Sigmoid colon (tissue), 7 donors: ENCODE measurements at regions of chr4 and their contacts with region 1.

Region 1: GRCh38 chr4:85756938-85757337 is 282.0 kb downstream of the ARHGAP24 start:
- DNase-seq: no peak
- H3K4me3 ChIP-seq: no peak overlapping the region
- H3K27ac ChIP-seq: no peak overlapping the region
- H3K4me1 ChIP-seq: peaks cover 0 to 10% (median 6%) of the 10 kb centered on the region in 4 donors
- H3K27me3 ChIP-seq: no peaks in the 10 kb centered on the region
- CTCF ChIP-seq: peak in 3 of 4 experiments; percentile 10 to 53 (median 17)
- EP300 ChIP-seq: no peak
- POLR2A ChIP-seq: no peak

Region 2: DNA sequence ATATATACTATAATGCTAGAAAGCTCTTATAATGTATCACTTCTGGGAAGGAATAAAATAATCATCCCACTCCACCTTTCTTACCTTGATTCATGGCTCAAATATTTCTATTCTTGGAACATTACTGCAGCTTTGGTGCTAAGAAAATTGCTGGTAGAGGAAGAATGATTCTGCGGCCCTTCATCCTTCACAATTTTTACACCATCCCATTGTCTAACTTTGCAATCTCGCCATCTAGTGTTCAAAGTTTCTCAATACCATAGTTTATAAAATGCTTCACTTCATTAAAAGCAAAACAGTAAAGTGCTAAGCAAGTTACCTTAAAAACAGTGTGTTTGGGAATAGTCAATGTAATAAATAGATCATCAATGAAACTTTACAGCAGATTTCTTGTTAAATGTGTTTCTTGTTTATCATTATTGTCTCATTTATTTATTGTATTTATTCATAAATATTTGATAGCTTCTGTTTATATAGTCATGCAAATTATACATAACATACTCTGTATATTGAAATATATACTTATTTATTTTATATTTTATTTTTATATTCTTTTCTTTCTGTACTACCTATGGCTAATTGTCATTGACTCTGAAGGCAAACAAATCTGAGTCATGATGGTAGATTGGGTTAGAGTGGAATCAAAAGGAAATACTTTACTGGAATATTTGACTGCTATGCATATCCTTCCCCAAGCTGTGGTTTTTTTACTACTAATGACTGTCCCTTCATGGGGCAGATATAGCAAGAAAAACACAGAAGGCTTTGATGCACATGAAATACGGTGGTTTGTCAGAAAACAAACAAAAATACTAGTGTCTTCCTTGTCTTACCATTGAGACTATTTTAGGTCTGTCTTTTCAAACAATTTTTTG is 212.2 kb after region 1 on chr4:
- intact Hi-C with region 1: loop called (anchors 5 kb)
- DNase-seq: no peak
- H3K4me3 ChIP-seq: no peak overlapping the region
- H3K27ac ChIP-seq: no peak overlapping the region
- H3K4me1 ChIP-seq: peaks cover 0 to 23% (median 17%) of the 10 kb centered on the region in 4 donors
- H3K27me3 ChIP-seq: no peaks in the 10 kb centered on the region
- CTCF ChIP-seq: peak in 3 of 4 experiments; percentile 48 to 52 (median 49)
- EP300 ChIP-seq: no peak
- POLR2A ChIP-seq: no peak

Region 3: DNA sequence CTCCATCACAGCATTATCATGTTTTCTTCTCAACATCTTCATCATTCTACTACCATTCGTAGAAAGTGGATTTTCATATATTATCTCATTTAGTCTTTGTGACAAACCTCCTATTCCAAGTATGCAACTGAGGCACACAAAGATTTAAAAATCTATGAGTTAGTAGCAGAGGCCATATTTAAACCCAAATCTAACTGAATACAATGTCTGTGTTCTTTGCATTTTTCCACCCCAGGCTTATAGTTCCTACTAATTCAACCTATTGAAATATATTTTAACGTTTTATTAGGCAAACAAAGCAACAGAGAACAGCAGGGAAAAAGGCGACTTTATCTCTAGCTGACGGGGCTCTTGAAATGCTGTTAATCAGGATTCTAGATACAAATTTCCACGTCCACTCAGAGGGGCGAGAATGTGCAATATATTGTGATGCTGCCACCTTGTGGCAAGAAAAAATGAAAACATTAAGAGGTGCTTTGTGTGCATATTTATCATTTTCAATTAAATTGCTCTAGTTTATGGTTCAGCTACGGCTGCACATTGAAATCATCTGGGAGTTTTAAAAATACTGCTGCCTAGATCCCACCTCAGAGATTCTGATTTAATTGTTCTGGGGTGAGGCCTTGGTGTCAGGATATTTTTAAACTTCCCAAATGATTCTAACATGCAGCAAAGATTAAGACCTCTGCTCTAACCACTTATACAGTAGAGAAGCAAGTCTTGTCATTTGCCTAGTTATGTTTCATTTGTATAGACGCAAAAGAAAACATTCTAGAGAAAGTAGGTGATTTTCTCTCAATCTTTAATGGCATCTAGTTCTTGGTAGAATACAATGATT is 287.0 kb after region 1 on chr4:
- intact Hi-C with region 1: loop called (anchors 10 kb)
- DNase-seq: no peak
- H3K4me3 ChIP-seq: no peak overlapping the region
- H3K27ac ChIP-seq: no peak overlapping the region
- H3K4me1 ChIP-seq: peaks cover 0 to 4% (median 0%) of the 10 kb centered on the region in 4 donors
- H3K27me3 ChIP-seq: no peaks in the 10 kb centered on the region
- CTCF ChIP-seq: peak in 3 of 4 experiments; percentile 23 to 58 (median 36)
- EP300 ChIP-seq: no peak
- POLR2A ChIP-seq: no peak

Region 4: GRCh38 chr4:86398187-86398586 is 641.2 kb after region 1 on chr4:
- intact Hi-C with region 1: no loop called
- DNase-seq: no peak
- H3K4me3 ChIP-seq: no peak overlapping the region
- H3K27ac ChIP-seq: no peak overlapping the region
- H3K4me1 ChIP-seq: no peaks in the 10 kb centered on the region
- H3K27me3 ChIP-seq: no peaks in the 10 kb centered on the region
- CTCF ChIP-seq: no peak
- EP300 ChIP-seq: no peak
- POLR2A ChIP-seq: no peak